ENCODE measurements at regions of chr4 and their contacts with region 1.

Region 1: GRCh38 chr4:157700898-157701694 is 471.7 kb downstream of the GASK1B start:
- DNase-seq: peak; percentile 10
- H3K4me3 ChIP-seq: no peak overlapping the region
- H3K27ac ChIP-seq: peak overlapping the region; percentile 34
- H3K4me1 ChIP-seq: peaks cover 26% of the 10 kb centered on the region
- H3K27me3 ChIP-seq: no peaks in the 10 kb centered on the region
- CTCF ChIP-seq: no peak

Region 2: GRCh38 chr4:157804986-157805385 is 103.9 kb after region 1 on chr4:
- CTCF ChIA-PET with region 1: no interaction called
- POLR2A ChIA-PET with region 1: no interaction called
- intact Hi-C with region 1: loop called (anchors 5 kb)
- DNase-seq: peak; percentile 9
- H3K4me3 ChIP-seq: no peak overlapping the region
- H3K27ac ChIP-seq: no peak overlapping the region
- H3K4me1 ChIP-seq: peaks cover 23% of the 10 kb centered on the region
- H3K27me3 ChIP-seq: no peaks in the 10 kb centered on the region
- CTCF ChIP-seq: peak; percentile 56